Calu3 (cell line): ENCODE measurements at regions of chr1 and their contacts with region 1.

Region 1: DNA sequence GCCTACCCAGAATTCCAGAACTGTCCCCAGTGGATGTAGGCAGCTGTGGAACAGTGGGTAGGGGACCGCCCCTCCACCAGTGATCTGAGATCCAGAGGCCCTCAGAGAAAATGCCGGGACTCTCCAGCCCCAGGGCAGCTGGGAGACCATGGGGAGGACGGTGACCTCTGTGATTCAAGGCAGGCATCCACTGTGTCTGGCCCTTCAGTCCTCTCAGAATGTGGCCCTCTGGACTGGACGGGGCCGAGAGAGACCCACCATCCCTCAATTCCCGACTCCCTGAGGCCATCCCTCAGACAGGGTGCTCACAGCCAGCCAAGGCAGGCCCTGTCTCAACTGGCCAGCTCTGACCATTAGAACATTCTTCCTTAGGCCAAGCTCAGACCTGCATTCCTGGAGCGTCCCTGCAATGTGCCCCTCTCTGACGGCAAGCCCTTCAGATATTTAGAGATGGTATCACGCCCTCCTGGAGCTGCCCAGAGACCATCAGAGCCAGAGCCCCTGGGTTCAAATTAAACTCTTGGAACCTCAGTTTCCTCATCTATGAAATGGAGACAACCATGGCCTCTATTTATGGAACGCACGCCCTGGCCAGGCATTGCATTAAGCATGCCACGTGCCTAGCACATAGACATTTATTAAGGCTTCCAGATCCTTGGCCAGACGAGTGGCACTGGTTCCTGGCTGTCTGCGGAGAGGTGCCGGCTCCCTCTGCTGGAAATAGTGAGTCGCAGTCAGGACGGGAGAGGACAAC is 9.6 kb upstream of the EPS8L3 start:
- DNase-seq: peak; percentile 72
- H3K4me3 Mint-ChIP-seq: no peak overlapping the region
- H3K27ac Mint-ChIP-seq: no peak overlapping the region
- H3K4me1 Mint-ChIP-seq: no peaks in the 10 kb centered on the region
- H3K27me3 Mint-ChIP-seq: peaks cover 14% of the 10 kb centered on the region
- CTCF ChIP-seq: peak; percentile 52

Region 2: GRCh38 chr1:109718491-109718890 is 54.8 kb before region 1 on chr1:
- CTCF ChIA-PET with region 1: interaction called, 18 read pairs
- intact Hi-C with region 1: loop called (anchors 1 kb)
- DNase-seq: peak; percentile 17
- H3K4me3 Mint-ChIP-seq: no peak overlapping the region
- H3K27ac Mint-ChIP-seq: no peak overlapping the region
- H3K4me1 Mint-ChIP-seq: no peaks in the 10 kb centered on the region
- H3K27me3 Mint-ChIP-seq: peaks cover 10% of the 10 kb centered on the region
- CTCF ChIP-seq: no peak